Endothelial cell of umbilical vein (primary cell): ENCODE measurements at regions of chr3 and their contacts with region 1.

Region 1: GRCh38 chr3:192851821-192852424 is 65.7 kb downstream of the MB21D2 start:
- DNase-seq: peak; percentile 92
- H3K4me3 ChIP-seq: no peak overlapping the region
- H3K27ac ChIP-seq: no peak overlapping the region
- H3K4me1 ChIP-seq: peaks cover 33% of the 10 kb centered on the region
- H3K27me3 ChIP-seq: no peaks in the 10 kb centered on the region
- CTCF ChIP-seq: no peak
- POLR2A ChIP-seq: no peak

Region 2: DNA sequence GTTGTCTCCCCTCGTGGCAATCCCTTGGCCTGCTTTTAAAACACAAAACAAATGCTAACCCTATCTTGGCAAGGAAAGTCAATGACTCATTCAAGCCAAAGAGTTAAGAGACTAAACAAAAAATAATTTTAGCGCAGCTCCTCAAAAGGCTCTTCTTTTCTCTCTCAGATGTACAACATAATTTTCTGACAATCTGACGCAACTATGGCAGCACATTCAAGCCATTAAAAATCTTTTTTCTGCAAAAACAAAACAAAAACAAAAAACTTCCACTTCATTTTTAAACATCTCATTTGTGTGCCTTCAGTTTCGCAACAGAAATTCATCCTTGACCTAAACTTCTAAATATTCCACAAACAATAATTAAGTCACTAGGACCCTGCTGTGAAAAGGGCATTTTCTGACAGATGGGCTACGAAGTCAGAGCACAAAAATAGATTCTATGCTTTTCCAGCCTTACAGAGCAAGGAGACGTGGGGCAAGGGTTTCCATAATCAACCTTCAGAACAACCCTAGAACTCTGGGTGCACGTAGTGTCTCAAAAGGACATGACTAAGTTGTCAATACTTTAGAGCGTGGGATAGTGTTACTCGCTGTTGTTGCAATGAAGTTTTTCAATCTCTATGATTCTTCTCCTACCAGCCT is 18.6 kb before region 1 on chr3:
- CTCF ChIA-PET with region 1: interaction called, 4 read pairs
- POLR2A ChIA-PET with region 1: no interaction called
- dilution Hi-C with region 1: no loop called
- intact Hi-C with region 1: loop called (anchors 1 kb)
- DNase-seq: peak; percentile 72
- H3K4me3 ChIP-seq: no peak overlapping the region
- H3K27ac ChIP-seq: no peak overlapping the region
- H3K4me1 ChIP-seq: peaks cover 11% of the 10 kb centered on the region
- H3K27me3 ChIP-seq: no peaks in the 10 kb centered on the region
- CTCF ChIP-seq: no peak
- POLR2A ChIP-seq: no peak

Region 3: GRCh38 chr3:192869131-192870031 is 17.5 kb after region 1 on chr3:
- CTCF ChIA-PET with region 1: no interaction called
- POLR2A ChIA-PET with region 1: no interaction called
- dilution Hi-C with region 1: no loop called
- intact Hi-C with region 1: loop called (anchors 1 kb)
- DNase-seq: peak; percentile 41
- H3K4me3 ChIP-seq: no peak overlapping the region
- H3K27ac ChIP-seq: peak overlapping the region; percentile 1
- H3K4me1 ChIP-seq: peaks cover 16% of the 10 kb centered on the region
- H3K27me3 ChIP-seq: no peaks in the 10 kb centered on the region
- CTCF ChIP-seq: no peak
- POLR2A ChIP-seq: no peak

Region 4: GRCh38 chr3:192879336-192880106 is 27.6 kb after region 1 on chr3:
- CTCF ChIA-PET with region 1: interaction called, 5 read pairs
- POLR2A ChIA-PET with region 1: interaction called, 3 read pairs
- dilution Hi-C with region 1: no loop called
- intact Hi-C with region 1: loop called (anchors 1 kb)
- DNase-seq: peak; percentile 63
- H3K4me3 ChIP-seq: no peak overlapping the region
- H3K27ac ChIP-seq: no peak overlapping the region
- H3K4me1 ChIP-seq: peaks cover 43% of the 10 kb centered on the region
- H3K27me3 ChIP-seq: no peaks in the 10 kb centered on the region
- CTCF ChIP-seq: no peak
- POLR2A ChIP-seq: no peak